Caco-2 (cell line): ENCODE measurements at regions of chr4 and their contacts with region 1.

Region 1: DNA sequence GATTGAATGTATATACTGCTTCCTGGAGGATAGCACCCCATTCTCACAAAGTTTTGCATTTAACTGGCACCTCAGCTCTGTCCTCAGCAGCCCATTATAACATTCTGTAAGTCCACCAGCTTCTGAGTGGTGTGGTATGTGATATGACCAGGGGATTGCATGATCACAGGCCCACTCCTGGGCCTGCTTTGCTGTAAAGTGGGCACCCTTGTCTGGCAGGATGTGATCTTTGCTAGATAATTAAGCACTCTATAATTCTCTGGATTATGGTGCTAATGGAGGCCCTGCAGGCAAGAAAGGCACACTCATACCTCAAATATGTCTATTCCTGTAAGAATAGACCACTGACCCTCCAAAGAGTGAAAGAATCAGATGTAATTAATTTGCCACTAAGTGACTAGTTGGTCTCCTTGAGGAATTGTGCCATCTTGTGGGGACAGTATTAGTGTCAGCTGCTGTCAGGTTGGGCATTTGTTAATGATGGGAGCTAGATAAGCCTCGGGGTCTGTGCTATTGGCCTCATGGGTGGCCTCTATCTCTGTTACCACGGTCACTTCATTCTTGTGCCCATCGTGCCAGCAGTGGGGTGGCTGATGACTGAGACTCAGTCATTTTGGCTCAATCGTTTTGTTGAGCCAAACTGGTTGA is 2.2 kb upstream of the CFI start:
- DNase-seq: peak; percentile 29 to 33
- H3K4me3 ChIP-seq: no peak overlapping the region
- H3K4me3 Mint-ChIP-seq: no peak overlapping the region
- H3K27ac Mint-ChIP-seq: no peak overlapping the region
- H3K4me1 ChIP-seq: no peaks in the 10 kb centered on the region
- H3K4me1 Mint-ChIP-seq: no peaks in the 10 kb centered on the region
- H3K27me3 ChIP-seq: no peaks in the 10 kb centered on the region
- H3K27me3 Mint-ChIP-seq: peaks cover 5% of the 10 kb centered on the region
- CTCF ChIP-seq: peak in 1 of 2 experiments; percentile 47

Region 2: GRCh38 chr4:109559983-109560686 is 243.9 kb before region 1 on chr4 and contains the start of gene MCUB:
- CTCF ChIA-PET with region 1: no interaction called
- POLR2A ChIA-PET with region 1: no interaction called
- intact Hi-C with region 1: loop called (anchors 10 kb)
- DNase-seq: peak; percentile 75 to 77
- H3K4me3 ChIP-seq: peak within 1 kb of the TSS; percentile 40
- H3K4me3 Mint-ChIP-seq: peak within 1 kb of the TSS; percentile 68
- H3K27ac Mint-ChIP-seq: no peak within 1 kb of the TSS
- H3K4me1 ChIP-seq: 0 out of 2 replicates have a peak, but pooled peaks cover 4% of the 10 kb centered on the region
- H3K4me1 Mint-ChIP-seq: peaks cover 9% of the 10 kb centered on the region
- H3K27me3 ChIP-seq: no peaks in the 10 kb centered on the region
- H3K27me3 Mint-ChIP-seq: no peaks in the 10 kb centered on the region
- CTCF ChIP-seq: no peak
- total RNA-seq, gene MCUB: 1.8 and 3.6 TPM in 2 replicates

Region 3: GRCh38 chr4:109640644-109641043 is 163.4 kb before region 1 on chr4:
- CTCF ChIA-PET with region 1: no interaction called
- POLR2A ChIA-PET with region 1: no interaction called
- intact Hi-C with region 1: no loop called
- DNase-seq: no peak
- H3K4me3 ChIP-seq: no peak overlapping the region
- H3K4me3 Mint-ChIP-seq: no peak overlapping the region
- H3K27ac Mint-ChIP-seq: no peak overlapping the region
- H3K4me1 ChIP-seq: no peaks in the 10 kb centered on the region
- H3K4me1 Mint-ChIP-seq: no peaks in the 10 kb centered on the region
- H3K27me3 ChIP-seq: no peaks in the 10 kb centered on the region
- H3K27me3 Mint-ChIP-seq: peaks cover 2% of the 10 kb centered on the region
- CTCF ChIP-seq: no peak

Region 4: GRCh38 chr4:110840221-110840654 is 1036.2 kb after region 1 on chr4:
- CTCF ChIA-PET with region 1: no interaction called
- POLR2A ChIA-PET with region 1: no interaction called
- intact Hi-C with region 1: no loop called
- DNase-seq: no peak
- H3K4me3 ChIP-seq: no peak overlapping the region
- H3K4me3 Mint-ChIP-seq: no peak overlapping the region
- H3K27ac Mint-ChIP-seq: no peak overlapping the region
- H3K4me1 ChIP-seq: peaks cover under 1% of the 10 kb centered on the region; the same call in 1 of the 2 replicates
- H3K4me1 Mint-ChIP-seq: peaks cover 10% of the 10 kb centered on the region
- H3K27me3 ChIP-seq: no peaks in the 10 kb centered on the region
- H3K27me3 Mint-ChIP-seq: no peaks in the 10 kb centered on the region
- CTCF ChIP-seq: no peak